SK-N-SH (cell line): ENCODE measurements at regions of chrX and their contacts with region 1.

Region 1: GRCh38 chrX:110847334-110847733 is 51.7 kb upstream of the CHRDL1 start:
- DNase-seq: peak; percentile 54
- H3K4me3 ChIP-seq: no peak overlapping the region
- H3K27ac ChIP-seq: no peak overlapping the region
- H3K4me1 ChIP-seq: no peaks in the 10 kb centered on the region
- H3K27me3 ChIP-seq: peaks cover 7% of the 10 kb centered on the region; the same call in 1 of the 2 replicates
- CTCF ChIP-seq: peak; percentile 72
- EP300 ChIP-seq: no peak
- RAD21 ChIP-seq: peak; percentile 79

Region 2: GRCh38 chrX:110412971-110413721 is 434.2 kb before region 1 on chrX:
- CTCF ChIA-PET with region 1: interaction called, 10 read pairs
- POLR2A ChIA-PET with region 1: no interaction called
- DNase-seq: peak; percentile 74
- H3K4me3 ChIP-seq: peak overlapping the region; percentile 12 to 17; a peak in 3 of 4 replicates
- H3K27ac ChIP-seq: no peak overlapping the region; a peak in 1 of 4 replicates
- H3K4me1 ChIP-seq: peaks cover 0 to 11% of the 10 kb centered on the region in 2 experiments; a peak in 1 of 4 replicates
- H3K27me3 ChIP-seq: no peaks in the 10 kb centered on the region
- CTCF ChIP-seq: peak; percentile 87
- EP300 ChIP-seq: no peak
- RAD21 ChIP-seq: peak; percentile 72

Region 3: DNA sequence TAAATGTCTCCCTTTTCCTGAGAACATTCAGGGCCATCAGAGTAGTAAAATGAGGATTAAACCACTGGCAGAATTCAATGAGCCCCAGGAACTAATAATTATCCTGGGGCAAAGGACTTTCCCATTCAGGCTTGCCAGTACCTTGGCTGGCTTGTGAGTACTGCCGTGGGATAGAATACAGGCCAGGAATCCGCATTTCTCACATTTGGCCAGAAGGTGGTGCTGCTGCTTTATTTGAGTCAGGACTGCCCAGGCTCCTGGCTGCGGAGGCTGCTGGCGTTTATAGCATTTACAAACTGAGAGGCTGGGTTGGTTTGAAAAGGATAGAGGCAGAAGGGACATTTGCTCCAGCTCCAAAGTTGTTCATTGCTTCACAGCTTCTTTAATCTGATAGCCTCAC is 397.3 kb before region 1 on chrX:
- CTCF ChIA-PET with region 1: interaction called, 32 read pairs
- POLR2A ChIA-PET with region 1: no interaction called
- DNase-seq: peak; percentile 77
- H3K4me3 ChIP-seq: no peak overlapping the region
- H3K27ac ChIP-seq: no peak overlapping the region
- H3K4me1 ChIP-seq: no peaks in the 10 kb centered on the region
- H3K27me3 ChIP-seq: peaks cover 51% of the 10 kb centered on the region
- CTCF ChIP-seq: peak; percentile 81
- EP300 ChIP-seq: no peak
- RAD21 ChIP-seq: peak; percentile 91

Region 4: GRCh38 chrX:110588164-110588563 is 259.2 kb before region 1 on chrX:
- CTCF ChIA-PET with region 1: no interaction called
- POLR2A ChIA-PET with region 1: no interaction called
- DNase-seq: no peak
- H3K4me3 ChIP-seq: no peak overlapping the region
- H3K27ac ChIP-seq: no peak overlapping the region
- H3K4me1 ChIP-seq: no peaks in the 10 kb centered on the region
- H3K27me3 ChIP-seq: no peaks in the 10 kb centered on the region
- CTCF ChIP-seq: no peak
- EP300 ChIP-seq: no peak
- RAD21 ChIP-seq: no peak

Region 5: GRCh38 chrX:110836982-110837381 is 10.4 kb before region 1 on chrX:
- CTCF ChIA-PET with region 1: interaction called, 35 read pairs
- POLR2A ChIA-PET with region 1: no interaction called
- DNase-seq: peak; percentile 22
- H3K4me3 ChIP-seq: no peak overlapping the region
- H3K27ac ChIP-seq: no peak overlapping the region
- H3K4me1 ChIP-seq: no peaks in the 10 kb centered on the region
- H3K27me3 ChIP-seq: peaks cover 6% of the 10 kb centered on the region; the same call in 1 of the 2 replicates
- CTCF ChIP-seq: peak; percentile 31
- EP300 ChIP-seq: no peak
- RAD21 ChIP-seq: peak; percentile 22; the same call in 1 of the 2 replicates